Activated T-helper 1 cell treated with anti-CD3 and anti-CD28 coated beads, Interleukin-12 subunit alpha, Interleukin-12 subunit beta, Interleukin-2, Interleukin-4 antibody, amounts not matched to agents 30 ng/mL and 10 ng/mL and 1 ng/mL, durations not matched to agents 14 hours and 24 hours and 36 hours (primary cell): ENCODE measurements at regions of chr3 and their contacts with region 1.

Region 1: DNA sequence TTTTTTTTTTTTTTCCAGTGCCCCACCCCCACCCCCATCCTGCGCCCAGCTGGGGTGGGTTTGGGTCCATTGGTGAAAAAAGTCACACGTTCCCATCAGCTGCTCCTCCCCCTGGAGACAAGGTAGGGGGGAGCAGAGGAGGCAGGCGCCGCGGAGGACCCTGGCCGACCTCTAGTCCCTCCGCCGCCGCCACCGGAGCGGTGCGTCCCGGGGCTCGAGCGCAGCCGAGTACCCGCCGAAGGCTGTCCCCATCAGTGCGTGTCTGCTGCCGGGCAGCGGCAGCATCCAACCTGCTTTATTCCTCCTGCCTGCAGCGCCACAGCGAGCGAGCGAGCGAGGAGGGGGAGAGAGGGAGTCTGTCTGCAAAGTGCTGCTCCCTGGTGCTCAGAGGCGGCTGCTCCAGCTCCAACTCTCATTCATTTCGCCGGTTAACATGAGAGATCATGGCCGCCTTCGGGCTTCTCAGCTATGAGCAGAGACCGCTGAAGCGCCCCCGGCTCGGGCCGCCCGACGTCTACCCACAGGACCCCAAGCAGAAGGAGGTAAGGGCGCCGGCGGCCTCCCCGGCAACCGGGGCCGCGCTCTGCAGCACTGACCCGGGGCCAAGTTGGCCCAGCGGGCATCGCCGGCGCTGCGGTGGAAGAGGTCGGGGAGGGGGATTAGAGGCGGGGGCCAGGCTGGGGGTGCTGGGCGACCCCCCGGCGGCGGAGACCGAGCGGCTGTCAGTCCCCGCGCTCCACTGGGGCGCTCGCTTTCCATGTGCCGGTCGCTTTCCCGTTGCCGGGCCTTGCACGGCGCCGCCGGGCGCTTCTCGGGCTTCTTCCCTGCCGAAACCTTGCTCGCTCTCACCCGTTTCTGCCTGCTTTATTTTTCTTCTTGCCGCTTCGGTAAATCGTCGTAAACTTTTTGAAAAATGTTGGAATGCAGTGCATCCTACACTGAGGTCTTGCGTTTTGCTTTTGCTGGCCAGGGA is 1.3 kb downstream of the MED12L start:
- DNase-seq: peak; percentile 58
- H3K4me3 Mint-ChIP-seq: peak overlapping the region; percentile 85
- H3K27ac Mint-ChIP-seq: peak overlapping the region; percentile 27
- H3K4me1 Mint-ChIP-seq: peaks cover 4% of the 10 kb centered on the region
- H3K27me3 Mint-ChIP-seq: peaks cover 48% of the 10 kb centered on the region

Region 2: GRCh38 chr3:149969940-149970715 is 1116.6 kb before region 1 on chr3:
- intact Hi-C with region 1: loop called (anchors 5 kb)
- DNase-seq: peak; percentile 56
- H3K4me3 Mint-ChIP-seq: peak overlapping the region; percentile 80
- H3K27ac Mint-ChIP-seq: no peak overlapping the region
- H3K4me1 Mint-ChIP-seq: peaks cover 12% of the 10 kb centered on the region
- H3K27me3 Mint-ChIP-seq: peaks cover 54% of the 10 kb centered on the region

Region 3: GRCh38 chr3:150721285-150722130 is 365.3 kb before region 1 on chr3:
- intact Hi-C with region 1: loop called (anchors 5 kb)
- DNase-seq: no peak
- H3K4me3 Mint-ChIP-seq: no peak overlapping the region
- H3K27ac Mint-ChIP-seq: no peak overlapping the region
- H3K4me1 Mint-ChIP-seq: peaks cover 46% of the 10 kb centered on the region
- H3K27me3 Mint-ChIP-seq: no peaks in the 10 kb centered on the region

Region 4: GRCh38 chr3:150870396-150870795 is 216.4 kb before region 1 on chr3:
- intact Hi-C with region 1: no loop called
- DNase-seq: no peak
- H3K4me3 Mint-ChIP-seq: no peak overlapping the region
- H3K27ac Mint-ChIP-seq: no peak overlapping the region
- H3K4me1 Mint-ChIP-seq: peaks cover 2% of the 10 kb centered on the region
- H3K27me3 Mint-ChIP-seq: peaks cover 12% of the 10 kb centered on the region

Region 5: GRCh38 chr3:151135541-151136337 is 49.0 kb after region 1 on chr3:
- intact Hi-C with region 1: loop called (anchors 1 kb)
- DNase-seq: peak; percentile 20
- H3K4me3 Mint-ChIP-seq: peak overlapping the region; percentile 10
- H3K27ac Mint-ChIP-seq: peak overlapping the region; percentile 72
- H3K4me1 Mint-ChIP-seq: peaks cover 26% of the 10 kb centered on the region
- H3K27me3 Mint-ChIP-seq: peaks cover 6% of the 10 kb centered on the region

Region 6: DNA sequence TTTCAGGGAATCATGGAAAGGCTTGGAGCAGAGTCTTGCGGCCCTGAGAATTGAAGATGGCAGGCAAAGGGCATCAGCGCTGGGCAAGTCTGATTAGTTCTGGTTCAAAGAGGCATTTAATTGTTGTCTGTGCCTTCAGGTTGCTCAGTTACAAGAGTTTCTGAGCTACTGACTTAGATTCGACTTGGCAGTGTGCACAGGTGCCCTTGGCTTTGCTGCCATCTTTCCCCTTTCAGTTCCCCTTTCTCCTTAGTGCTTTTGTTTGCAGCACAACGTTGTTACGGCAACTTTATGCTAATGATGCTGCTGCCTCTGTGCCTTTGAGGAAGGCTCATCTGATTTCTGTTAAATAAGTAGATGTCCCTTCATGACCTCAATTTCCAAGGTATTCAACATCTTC is 179.1 kb after region 1 on chr3:
- intact Hi-C with region 1: loop called (anchors 1 kb)
- DNase-seq: no peak
- H3K4me3 Mint-ChIP-seq: no peak overlapping the region
- H3K27ac Mint-ChIP-seq: no peak overlapping the region
- H3K4me1 Mint-ChIP-seq: peaks cover 66% of the 10 kb centered on the region
- H3K27me3 Mint-ChIP-seq: peaks cover 5% of the 10 kb centered on the region